Stomach (tissue), 19 donors: ENCODE measurements at regions of chr6 and their contacts with region 1.

Region 1: GRCh38 chr6:42043787-42044475 is 6.4 kb upstream of the TAF8 start:
- DNase-seq: peak; percentile 85 to 95
- H3K4me3 ChIP-seq: peak overlapping the region; percentile 18 to 86 (median 25)
- H3K27ac ChIP-seq: peak overlapping the region; percentile 13 to 95 (median 92)
- H3K4me1 ChIP-seq: peaks cover 74 to 94% (median 85%) of the 10 kb centered on the region in 4 donors
- H3K27me3 ChIP-seq: no peaks in the 10 kb centered on the region
- CTCF ChIP-seq: peak in 6 of 7 experiments; percentile 86 to 98 (median 96)
- EP300 ChIP-seq: no peak
- POLR2A ChIP-seq: no peak

Region 2: GRCh38 chr6:41787219-41787917 is 256.6 kb before region 1 on chr6 and contains the start of gene TOMM6:
- intact Hi-C with region 1: loop called (anchors 10 kb)
- DNase-seq: peak; percentile 96 to 98
- H3K4me3 ChIP-seq: peak within 1 kb of the TSS; percentile 66 to 98 (median 80)
- H3K27ac ChIP-seq: peak within 1 kb of the TSS; percentile 93 to 97 (median 96)
- H3K4me1 ChIP-seq: peaks cover 35 to 58% (median 56%) of the 10 kb centered on the region in 4 donors
- H3K27me3 ChIP-seq: no peaks in the 10 kb centered on the region
- CTCF ChIP-seq: peak in 6 of 7 experiments; percentile 68 to 99 (median 96)
- EP300 ChIP-seq: no peak
- POLR2A ChIP-seq: peak in 2 of 4 donors; percentile 52 to 73
- total RNA-seq, gene TOMM6: 11.9 to 159 (median 68.7) TPM

Region 3: GRCh38 chr6:41917528-41917927 is 126.4 kb before region 1 on chr6:
- intact Hi-C with region 1: no loop called
- DNase-seq: no peak
- H3K4me3 ChIP-seq: no peak overlapping the region
- H3K27ac ChIP-seq: no peak overlapping the region
- H3K4me1 ChIP-seq: peaks cover 19 to 52% (median 27%) of the 10 kb centered on the region in 4 donors
- H3K27me3 ChIP-seq: no peaks in the 10 kb centered on the region
- CTCF ChIP-seq: no peak
- EP300 ChIP-seq: no peak
- POLR2A ChIP-seq: no peak

Region 4: DNA sequence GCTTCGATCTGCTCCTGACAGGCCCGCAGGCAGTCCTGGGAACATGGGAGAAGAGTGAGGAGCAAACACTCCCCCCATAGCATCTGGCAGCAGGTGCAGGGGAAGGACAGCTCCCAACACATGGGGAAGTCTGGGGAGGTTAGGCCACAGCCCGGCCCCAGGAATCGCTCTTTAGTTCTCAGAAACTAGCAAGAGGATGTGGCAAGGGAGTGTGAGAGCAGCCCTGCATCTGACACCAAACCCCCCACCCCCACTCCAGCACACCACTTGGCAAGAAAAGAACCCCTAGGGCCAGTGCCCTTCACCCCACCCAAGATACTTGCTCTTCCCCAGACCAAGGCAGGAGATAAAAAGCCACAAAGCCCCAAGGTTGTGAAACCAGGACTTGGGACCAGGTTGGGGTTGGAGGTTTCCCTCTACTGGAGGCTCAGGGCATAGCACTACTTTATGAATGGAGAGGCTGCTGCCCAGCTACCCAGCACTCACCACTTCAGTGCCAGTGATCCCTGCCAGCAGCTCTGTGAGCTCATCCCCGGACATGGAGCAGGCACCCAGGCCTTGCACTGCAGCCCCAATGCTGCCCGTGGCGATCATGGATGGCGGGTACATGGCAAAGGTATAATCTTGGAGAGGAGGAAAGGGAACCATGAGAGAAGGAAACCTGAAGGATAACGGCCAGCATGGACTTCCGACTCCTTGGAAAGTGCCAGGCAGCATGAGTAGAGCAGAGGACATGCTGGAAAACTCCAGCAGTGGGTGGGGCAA is 107.7 kb before region 1 on chr6:
- intact Hi-C with region 1: loop called (anchors 10 kb)
- DNase-seq: peak; percentile 62 to 89
- H3K4me3 ChIP-seq: no peak overlapping the region
- H3K27ac ChIP-seq: peak overlapping the region in 4 of 5 donors; percentile 89 to 91 (median 90)
- H3K4me1 ChIP-seq: peaks cover 23 to 63% (median 54%) of the 10 kb centered on the region in 4 donors
- H3K27me3 ChIP-seq: no peaks in the 10 kb centered on the region
- CTCF ChIP-seq: peak in 5 of 7 experiments; percentile 60 to 85 (median 72)
- EP300 ChIP-seq: no peak
- POLR2A ChIP-seq: no peak

Region 5: GRCh38 chr6:42782622-42783176 is 738.8 kb after region 1 on chr6:
- intact Hi-C with region 1: no loop called
- DNase-seq: peak; percentile 75 to 93
- H3K4me3 ChIP-seq: peak overlapping the region; percentile 48 to 97 (median 63)
- H3K27ac ChIP-seq: peak overlapping the region; percentile 97 to 100 (median 100)
- H3K4me1 ChIP-seq: peaks cover 28 to 47% (median 37%) of the 10 kb centered on the region in 4 donors
- H3K27me3 ChIP-seq: no peaks in the 10 kb centered on the region
- CTCF ChIP-seq: no peak
- EP300 ChIP-seq: no peak
- POLR2A ChIP-seq: peak in 2 of 4 donors; percentile 28 to 33